Mammary epithelial cell (primary cell): ENCODE measurements at regions of chr17 and their contacts with region 1.

Region 1: GRCh38 chr17:49556223-49556971 is 19.3 kb upstream of the NXPH3 start:
- DNase-seq: peak; percentile 44
- H3K4me3 ChIP-seq: no peak overlapping the region
- H3K27ac ChIP-seq: no peak overlapping the region
- H3K4me1 ChIP-seq: peaks cover 18% of the 10 kb centered on the region
- H3K27me3 ChIP-seq: no peaks in the 10 kb centered on the region
- CTCF ChIP-seq: peak; percentile 91 to 99

Region 2: GRCh38 chr17:49407981-49408501 is 148.4 kb before region 1 on chr17:
- CTCF ChIA-PET with region 1: interaction called, 4 read pairs
- dilution Hi-C with region 1: no loop called
- in situ Hi-C with region 1: no loop called
- intact Hi-C with region 1: loop called (anchors 1 kb)
- DNase-seq: peak; percentile 43
- H3K4me3 ChIP-seq: no peak overlapping the region
- H3K27ac ChIP-seq: no peak overlapping the region
- H3K4me1 ChIP-seq: no peaks in the 10 kb centered on the region
- H3K27me3 ChIP-seq: no peaks in the 10 kb centered on the region
- CTCF ChIP-seq: peak; percentile 84 to 88